ENCODE measurements at regions of chr6 and their contacts with region 1.

Region 1: DNA sequence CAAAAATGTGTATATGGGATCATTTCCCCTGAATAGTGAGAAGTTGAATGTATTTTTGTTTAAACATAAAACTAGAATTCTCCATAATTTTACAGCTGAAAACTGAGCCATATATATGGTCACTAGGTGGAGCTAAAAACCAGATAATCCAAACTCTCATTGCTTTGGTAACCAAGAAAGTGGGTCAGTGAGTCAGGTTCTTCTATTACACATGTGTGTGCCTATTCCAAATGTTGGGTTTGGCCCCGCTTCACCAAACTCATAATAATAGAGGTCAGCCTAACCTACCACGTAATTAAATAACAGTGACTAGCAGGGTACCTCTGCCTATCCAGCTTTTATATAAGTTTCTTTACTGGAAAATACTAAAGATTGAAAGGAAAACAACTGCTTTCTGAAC is 19.3 kb upstream of the RNGTT start:
- DNase-seq: peak; percentile 52
- H3K4me3 ChIP-seq: peak overlapping the region in 1 of 2 experiments; percentile 24; a peak in 1 of 4 replicates
- H3K27ac ChIP-seq: no peak overlapping the region
- H3K4me1 ChIP-seq: no peaks in the 10 kb centered on the region; a peak in 2 of 4 replicates
- H3K27me3 ChIP-seq: no peaks in the 10 kb centered on the region
- CTCF ChIP-seq: peak; percentile 89
- EP300 ChIP-seq: no peak
- RAD21 ChIP-seq: peak; percentile 94

Region 2: GRCh38 chr6:88586371-88587149 is 396.2 kb before region 1 on chr6:
- CTCF ChIA-PET with region 1: no interaction called
- POLR2A ChIA-PET with region 1: no interaction called
- DNase-seq: no peak
- H3K4me3 ChIP-seq: no peak overlapping the region
- H3K27ac ChIP-seq: no peak overlapping the region
- H3K4me1 ChIP-seq: no peaks in the 10 kb centered on the region
- H3K27me3 ChIP-seq: 0 out of 2 replicates have a peak, but pooled peaks cover 6% of the 10 kb centered on the region
- CTCF ChIP-seq: no peak
- EP300 ChIP-seq: no peak
- RAD21 ChIP-seq: no peak

Region 3: GRCh38 chr6:88992741-88993552 is 10.2 kb after region 1 on chr6:
- CTCF ChIA-PET with region 1: interaction called, 20 read pairs
- POLR2A ChIA-PET with region 1: no interaction called
- DNase-seq: no peak
- H3K4me3 ChIP-seq: no peak overlapping the region
- H3K27ac ChIP-seq: no peak overlapping the region
- H3K4me1 ChIP-seq: no peaks in the 10 kb centered on the region
- H3K27me3 ChIP-seq: no peaks in the 10 kb centered on the region
- CTCF ChIP-seq: no peak
- EP300 ChIP-seq: no peak
- RAD21 ChIP-seq: no peak

Region 4: GRCh38 chr6:89013438-89013837 is 30.7 kb after region 1 on chr6:
- CTCF ChIA-PET with region 1: interaction called, 12 read pairs
- POLR2A ChIA-PET with region 1: no interaction called
- DNase-seq: no peak
- H3K4me3 ChIP-seq: no peak overlapping the region
- H3K27ac ChIP-seq: no peak overlapping the region
- H3K4me1 ChIP-seq: no peaks in the 10 kb centered on the region
- H3K27me3 ChIP-seq: no peaks in the 10 kb centered on the region
- CTCF ChIP-seq: no peak
- EP300 ChIP-seq: no peak
- RAD21 ChIP-seq: no peak

Region 5: DNA sequence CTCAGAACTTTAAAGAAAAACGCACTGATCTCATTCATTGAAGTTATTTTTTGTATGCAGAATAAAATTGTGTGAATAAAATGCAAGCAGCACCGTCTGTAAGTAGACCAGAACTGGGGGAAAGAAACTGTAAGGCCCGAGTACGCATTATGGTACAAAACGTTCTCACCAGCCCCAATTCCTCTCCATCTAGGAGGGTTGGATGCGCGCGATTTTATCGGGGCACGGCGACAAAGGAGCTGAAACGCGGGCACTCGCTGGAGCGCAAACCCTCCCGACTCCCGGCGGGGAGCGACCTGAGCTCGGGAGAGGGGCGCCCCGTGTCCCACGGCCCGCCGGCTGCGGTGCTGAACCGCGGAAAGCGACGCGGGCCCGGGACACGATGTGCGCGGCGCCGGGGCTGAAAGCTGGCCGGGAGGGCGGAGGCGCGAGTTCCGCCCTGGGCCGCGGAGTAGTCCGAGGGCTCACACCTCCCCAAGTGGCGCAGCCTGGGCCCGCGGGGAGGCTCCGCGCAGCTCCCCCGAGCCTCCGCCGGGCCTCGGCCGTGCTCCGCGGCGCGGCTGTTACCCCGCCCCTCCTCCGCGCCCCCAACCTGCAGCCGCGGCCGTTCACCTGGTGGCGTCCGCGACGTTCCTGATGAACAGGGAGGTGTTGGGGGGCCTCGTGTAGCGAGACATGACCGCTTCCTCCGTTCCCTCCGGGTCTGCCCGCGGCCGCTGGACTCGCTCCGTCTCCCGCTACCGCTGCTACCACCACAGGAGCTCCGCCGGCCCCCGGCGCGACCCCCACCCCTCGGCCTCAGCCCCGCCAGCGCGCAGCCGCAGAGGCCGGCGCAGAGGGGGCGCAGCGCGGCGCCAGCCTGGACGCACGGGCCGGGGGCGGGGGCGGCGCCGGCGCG is 134.7 kb after region 1 on chr6 and contains the start of gene SRSF12:
- CTCF ChIA-PET with region 1: interaction called, 38 read pairs
- POLR2A ChIA-PET with region 1: no interaction called
- DNase-seq: peak; percentile 98
- H3K4me3 ChIP-seq: peak within 1 kb of the TSS; percentile 63 to 71
- H3K27ac ChIP-seq: peak within 1 kb of the TSS in 1 of 2 experiments; percentile 37; a peak in 1 of 4 replicates
- H3K4me1 ChIP-seq: peaks cover 0 to 5% of the 10 kb centered on the region in 2 experiments; a peak in 1 of 4 replicates
- H3K27me3 ChIP-seq: no peaks in the 10 kb centered on the region
- CTCF ChIP-seq: no peak
- EP300 ChIP-seq: no peak
- RAD21 ChIP-seq: no peak
- polyA plus RNA-seq, gene SRSF12: 1.1 TPM in 2 replicates

Region 6: DNA sequence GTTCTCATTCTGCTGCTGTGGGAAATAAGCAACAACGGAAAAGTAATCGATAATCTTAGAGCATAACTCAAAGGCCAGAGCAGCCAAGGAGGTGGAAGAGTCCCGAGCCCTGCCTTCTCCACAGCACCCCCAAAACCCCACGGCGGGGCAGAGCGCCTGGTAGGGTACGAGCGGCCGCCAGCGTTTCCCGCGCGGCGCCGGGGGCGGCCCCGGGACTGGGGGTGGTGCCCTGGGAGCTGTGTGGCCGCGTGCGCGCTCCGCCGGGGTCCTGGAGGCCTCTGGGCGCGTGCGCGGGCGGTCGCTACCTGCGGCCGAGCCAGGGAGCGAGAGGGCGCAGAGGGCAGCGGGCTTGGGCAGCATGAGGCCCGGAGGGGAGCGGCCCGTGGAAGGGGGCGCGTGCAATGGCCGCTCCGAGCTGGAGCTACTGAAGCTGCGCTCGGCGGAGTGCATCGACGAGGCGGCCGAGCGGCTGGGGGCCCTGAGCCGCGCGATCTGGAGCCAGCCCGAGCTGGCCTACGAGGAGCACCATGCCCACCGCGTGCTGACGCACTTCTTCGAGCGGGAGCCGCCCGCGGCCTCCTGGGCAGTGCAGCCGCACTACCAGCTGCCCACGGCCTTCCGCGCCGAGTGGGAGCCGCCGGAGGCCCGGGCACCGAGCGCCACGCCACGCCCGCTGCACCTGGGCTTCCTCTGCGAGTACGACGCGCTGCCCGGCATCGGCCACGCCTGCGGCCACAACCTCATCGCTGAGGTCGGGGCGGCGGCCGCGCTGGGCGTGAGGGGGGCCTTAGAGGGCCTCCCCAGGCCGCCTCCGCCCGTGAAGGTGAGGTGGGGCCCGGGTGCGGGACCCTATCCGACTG is 163.3 kb after region 1 on chr6 and contains the start of gene PM20D2:
- CTCF ChIA-PET with region 1: interaction called, 12 read pairs
- POLR2A ChIA-PET with region 1: no interaction called
- DNase-seq: peak; percentile 97
- H3K4me3 ChIP-seq: peak within 1 kb of the TSS; percentile 69 to 86
- H3K27ac ChIP-seq: peak within 1 kb of the TSS; percentile 69 to 79
- H3K4me1 ChIP-seq: peaks cover 0 to 5% of the 10 kb centered on the region in 2 experiments; a peak in 3 of 4 replicates
- H3K27me3 ChIP-seq: no peaks in the 10 kb centered on the region
- CTCF ChIP-seq: no peak
- EP300 ChIP-seq: no peak
- RAD21 ChIP-seq: no peak
- polyA plus RNA-seq, gene PM20D2: 6.2 and 8.4 TPM in 2 replicates

Region 7: DNA sequence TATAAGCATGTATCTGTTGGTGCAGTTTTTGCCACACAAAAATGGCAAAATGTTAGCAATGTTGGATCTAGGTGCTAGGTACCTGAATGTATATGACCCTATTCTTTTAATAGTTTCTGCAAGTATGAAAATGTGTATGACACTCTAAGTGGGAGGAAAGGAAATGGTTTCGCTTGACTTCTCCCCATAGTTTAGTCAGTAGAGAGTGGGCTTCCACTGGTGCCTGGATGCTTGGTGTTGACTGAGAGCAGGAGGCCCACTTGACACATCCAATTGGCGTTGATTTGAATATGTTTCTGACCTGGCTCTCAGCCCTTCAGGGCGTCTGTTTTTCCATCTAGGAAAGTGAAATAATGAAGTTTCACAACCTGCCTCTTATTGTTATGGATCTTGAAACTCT is 276.2 kb after region 1 on chr6:
- CTCF ChIA-PET with region 1: interaction called, 10 read pairs
- POLR2A ChIA-PET with region 1: no interaction called
- DNase-seq: no peak
- H3K4me3 ChIP-seq: no peak overlapping the region
- H3K27ac ChIP-seq: no peak overlapping the region
- H3K4me1 ChIP-seq: peaks cover 0 to 7% of the 10 kb centered on the region in 2 experiments; a peak in 1 of 4 replicates
- H3K27me3 ChIP-seq: no peaks in the 10 kb centered on the region
- CTCF ChIP-seq: no peak
- EP300 ChIP-seq: no peak
- RAD21 ChIP-seq: no peak